ENCODE measurements at regions of chr12 and their contacts with region 1.

Region 1: GRCh38 chr12:132824053-132824452 is 4.6 kb downstream of the GOLGA3 start:
- DNase-seq: no peak
- ATAC-seq: no peak
- H3K4me3 ChIP-seq: no peak overlapping the region
- H3K27ac ChIP-seq: no peak overlapping the region
- H3K4me1 ChIP-seq: peaks cover 23% of the 10 kb centered on the region
- H3K27me3 ChIP-seq: no peaks in the 10 kb centered on the region
- CTCF ChIP-seq: no peak
- EP300 ChIP-seq: no peak
- POLR2A ChIP-seq: no peak
- RAD21 ChIP-seq: no peak

Region 2: DNA sequence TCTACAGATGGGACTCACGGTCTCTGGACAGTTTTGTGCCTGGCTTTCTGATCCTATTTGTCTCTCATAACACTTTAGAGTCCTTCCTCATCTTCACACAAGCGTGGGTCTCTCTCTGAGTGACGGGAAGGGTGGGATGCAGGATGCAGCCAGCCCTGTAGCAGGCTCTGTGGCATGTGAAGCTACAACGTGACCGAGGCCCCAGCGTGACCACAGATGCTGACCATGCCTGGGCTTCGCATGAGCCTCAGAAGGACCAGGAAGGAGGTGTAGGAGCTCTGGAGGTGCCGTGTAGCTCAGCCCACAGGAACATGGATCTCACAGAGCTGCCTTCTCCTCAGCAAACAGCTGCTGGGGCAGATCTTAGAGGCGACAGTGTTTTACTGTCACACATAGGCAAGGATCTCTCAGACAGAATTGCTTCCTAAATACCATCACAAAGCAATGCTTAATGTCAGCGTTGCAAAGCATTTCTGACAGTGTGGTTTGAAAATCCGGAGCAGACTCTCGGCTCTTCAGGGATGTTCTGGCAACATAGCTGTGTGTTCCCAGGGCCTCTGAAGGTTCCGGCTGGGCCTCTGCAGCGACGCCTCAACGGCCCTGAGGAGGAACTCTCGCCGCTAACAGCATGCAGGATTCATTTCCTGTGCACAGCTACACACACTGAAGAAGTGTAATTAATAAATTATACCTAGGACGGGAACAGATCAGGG is 84.3 kb before region 1 on chr12:
- CTCF ChIA-PET with region 1: no interaction called
- POLR2A ChIA-PET with region 1: no interaction called
- RAD21 ChIA-PET with region 1: no interaction called
- SMC1A ChIA-PET with region 1: no interaction called
- in situ Hi-C with region 1: no loop called
- intact Hi-C with region 1: no loop called
- DNase-seq: no peak
- ATAC-seq: no peak
- H3K4me3 ChIP-seq: no peak overlapping the region
- H3K27ac ChIP-seq: no peak overlapping the region
- H3K4me1 ChIP-seq: no peaks in the 10 kb centered on the region
- H3K27me3 ChIP-seq: no peaks in the 10 kb centered on the region
- CTCF ChIP-seq: no peak
- EP300 ChIP-seq: no peak
- POLR2A ChIP-seq: no peak
- RAD21 ChIP-seq: no peak

Region 3: DNA sequence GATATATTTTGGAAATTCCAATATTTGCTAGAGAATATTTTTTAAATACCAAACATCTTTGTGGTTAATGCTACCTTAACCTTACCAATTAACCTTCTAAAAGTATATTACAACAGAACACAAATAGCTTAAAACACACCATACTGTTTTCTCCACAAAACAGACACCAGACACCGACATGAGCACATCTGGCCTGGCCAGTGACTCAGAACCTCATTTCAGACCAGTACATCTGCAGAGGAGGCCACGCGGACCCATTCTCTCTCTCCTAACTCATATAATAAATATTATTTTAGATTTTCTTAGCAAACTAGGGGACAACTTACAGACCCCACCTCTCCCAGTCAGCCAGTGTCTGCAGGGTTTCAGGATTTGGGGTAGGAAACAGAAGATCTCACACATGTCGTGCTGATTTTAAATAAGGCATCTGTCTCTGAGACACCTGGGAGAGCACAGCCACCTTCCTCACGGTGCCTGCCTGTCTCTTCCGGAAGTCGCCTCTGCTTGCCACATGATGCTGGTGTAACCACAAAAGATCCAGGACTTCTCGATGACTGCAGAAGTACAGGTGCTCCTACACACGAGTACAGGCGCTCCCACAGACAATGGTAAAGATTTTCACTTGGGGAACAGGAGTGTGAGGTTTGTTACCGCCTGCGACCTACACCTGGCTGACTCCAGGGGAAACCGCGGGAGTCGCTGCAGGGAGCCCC is 52.8 kb before region 1 on chr12:
- CTCF ChIA-PET with region 1: interaction called, 5 read pairs
- POLR2A ChIA-PET with region 1: interaction called, 5 read pairs
- RAD21 ChIA-PET with region 1: interaction called, 10 read pairs
- SMC1A ChIA-PET with region 1: interaction called, 7 read pairs
- in situ Hi-C with region 1: no loop called
- intact Hi-C with region 1: loop called (anchors 2 kb)
- DNase-seq: no peak
- ATAC-seq: peak; percentile 56
- H3K4me3 ChIP-seq: peak overlapping the region; percentile 49; the same call in 1 of the 2 replicates
- H3K27ac ChIP-seq: peak overlapping the region; percentile 95
- H3K4me1 ChIP-seq: peaks cover 55% of the 10 kb centered on the region
- H3K27me3 ChIP-seq: no peaks in the 10 kb centered on the region
- CTCF ChIP-seq: no peak
- EP300 ChIP-seq: no peak
- POLR2A ChIP-seq: peak; percentile 66; the same call in 1 of the 2 replicates
- RAD21 ChIP-seq: no peak

Measured in GM12878 (cell line).